Caco-2 (cell line): ENCODE measurements at regions of chr6 and their contacts with region 1.

Region 1: GRCh38 chr6:149934249-149935156 is 7.3 kb upstream of the ULBP2 start:
- DNase-seq: peak; percentile 49 to 69
- H3K4me3 ChIP-seq: no peak overlapping the region
- H3K4me3 Mint-ChIP-seq: no peak overlapping the region
- H3K27ac Mint-ChIP-seq: no peak overlapping the region
- H3K4me1 ChIP-seq: no peaks in the 10 kb centered on the region
- H3K4me1 Mint-ChIP-seq: peaks cover 7% of the 10 kb centered on the region
- H3K27me3 ChIP-seq: no peaks in the 10 kb centered on the region; the same call in none of the 2 replicates
- H3K27me3 Mint-ChIP-seq: peaks cover 31% of the 10 kb centered on the region
- CTCF ChIP-seq: peak; percentile 60 to 74

Region 2: DNA sequence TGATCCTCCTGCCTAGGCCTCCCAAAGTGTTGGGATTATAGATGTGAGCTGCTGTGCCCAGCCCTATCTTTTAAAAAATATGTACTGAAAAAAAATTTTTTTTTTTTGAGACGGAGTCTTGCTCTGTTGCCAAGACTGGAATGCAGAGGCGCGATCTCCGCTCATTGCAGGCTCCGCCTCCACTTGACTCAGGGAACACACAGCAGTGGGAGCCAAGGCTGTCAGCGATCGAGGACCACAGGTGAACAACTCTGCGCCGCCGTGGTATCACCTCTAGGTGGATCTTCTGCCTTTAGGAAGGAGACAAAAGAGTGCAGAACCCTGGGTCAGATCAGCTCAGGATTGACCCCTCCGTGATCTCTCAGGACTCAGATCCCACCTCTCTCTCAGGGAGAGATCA is 50.3 kb before region 1 on chr6:
- CTCF ChIA-PET with region 1: no interaction called
- POLR2A ChIA-PET with region 1: no interaction called
- intact Hi-C with region 1: no loop called
- DNase-seq: no peak
- H3K4me3 ChIP-seq: no peak overlapping the region
- H3K4me3 Mint-ChIP-seq: no peak overlapping the region
- H3K27ac Mint-ChIP-seq: no peak overlapping the region
- H3K4me1 ChIP-seq: no peaks in the 10 kb centered on the region
- H3K4me1 Mint-ChIP-seq: no peaks in the 10 kb centered on the region
- H3K27me3 ChIP-seq: no peaks in the 10 kb centered on the region
- H3K27me3 Mint-ChIP-seq: peaks cover 7% of the 10 kb centered on the region
- CTCF ChIP-seq: no peak

Region 3: GRCh38 chr6:150068720-150069648 is 134.5 kb after region 1 on chr6 and contains the start of gene ULBP3:
- CTCF ChIA-PET with region 1: no interaction called
- POLR2A ChIA-PET with region 1: no interaction called
- intact Hi-C with region 1: loop called (anchors 5 kb)
- DNase-seq: peak; percentile 91 to 93
- H3K4me3 ChIP-seq: peak within 1 kb of the TSS; percentile 66
- H3K4me3 Mint-ChIP-seq: peak within 1 kb of the TSS; percentile 80
- H3K27ac Mint-ChIP-seq: peak within 1 kb of the TSS; percentile 44
- H3K4me1 ChIP-seq: no peaks in the 10 kb centered on the region; the same call in 1 of the 2 replicates
- H3K4me1 Mint-ChIP-seq: peaks cover 7% of the 10 kb centered on the region
- H3K27me3 ChIP-seq: no peaks in the 10 kb centered on the region
- H3K27me3 Mint-ChIP-seq: no peaks in the 10 kb centered on the region
- CTCF ChIP-seq: peak; percentile 48 to 86
- total RNA-seq, gene ULBP3: 8.1 and 8.5 TPM in 2 replicates